ENCODE measurements at regions of chr2 and their contacts with region 1.

Region 1: DNA sequence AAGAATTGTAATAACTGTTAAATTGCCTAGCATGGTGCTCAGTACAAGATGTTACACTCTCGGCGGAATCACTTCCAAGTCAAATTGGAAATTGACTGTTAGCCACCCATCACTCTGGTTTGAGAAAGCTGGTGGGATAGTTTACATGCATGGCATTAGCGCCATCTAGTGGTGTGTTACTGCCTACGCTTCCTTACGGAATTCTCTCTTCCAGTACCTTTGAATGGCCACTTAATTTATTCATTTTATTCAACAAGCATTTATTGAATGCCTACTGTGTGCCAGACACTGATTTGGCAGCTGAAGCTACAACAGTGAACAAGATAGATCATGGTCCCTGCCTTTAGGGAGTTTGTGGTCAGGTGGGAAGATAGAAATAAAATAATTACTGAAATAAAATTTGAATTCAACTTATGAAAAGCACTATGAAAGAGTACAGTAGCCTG is 171.2 kb downstream of the TMEM247 start:
- DNase-seq: no peak
- H3K4me3 ChIP-seq: no peak overlapping the region
- H3K27me3 ChIP-seq: no peaks in the 10 kb centered on the region
- CTCF ChIP-seq: peak; percentile 90

Region 2: DNA sequence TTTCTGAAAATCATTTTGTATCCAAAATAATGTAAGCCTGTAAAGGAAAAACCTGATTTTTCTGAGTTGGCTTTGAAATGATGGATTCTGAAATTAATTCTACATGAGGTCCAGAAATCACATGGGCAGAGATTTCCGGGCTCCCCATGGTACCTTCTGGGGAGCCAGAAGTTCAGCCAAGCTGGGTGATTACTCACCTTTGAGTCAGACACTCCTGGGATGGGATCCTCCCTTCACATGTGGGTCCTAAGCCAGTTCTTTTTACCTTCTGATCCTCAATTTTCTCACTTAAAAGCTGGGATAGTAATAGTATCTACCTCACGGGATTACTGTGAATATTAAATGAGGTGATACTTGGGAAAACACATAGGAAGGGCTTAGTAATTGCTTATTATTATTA is 533.2 kb before region 1 on chr2:
- CTCF ChIA-PET with region 1: no interaction called
- POLR2A ChIA-PET with region 1: no interaction called
- DNase-seq: no peak
- H3K4me3 ChIP-seq: no peak overlapping the region
- H3K27me3 ChIP-seq: no peaks in the 10 kb centered on the region
- CTCF ChIP-seq: no peak

Region 3: DNA sequence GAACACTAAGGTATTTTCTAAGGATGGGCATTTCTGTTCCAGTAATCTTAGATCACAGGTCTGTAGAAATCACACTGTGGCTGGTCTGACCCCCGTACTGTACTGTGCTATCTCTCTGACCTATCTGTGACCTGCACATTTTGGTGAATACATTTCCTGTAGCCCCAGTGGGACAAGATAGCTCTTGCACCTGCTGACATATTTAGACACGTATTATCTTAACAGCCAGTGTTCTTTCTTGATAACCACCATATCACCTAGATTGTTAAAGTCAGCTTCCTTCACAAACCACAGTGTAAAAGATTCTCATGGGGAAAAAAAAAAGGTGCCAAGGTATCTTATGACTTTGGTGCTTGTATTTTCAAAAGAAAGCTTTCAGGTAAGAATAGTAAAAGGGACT is 211.0 kb before region 1 on chr2:
- CTCF ChIA-PET with region 1: no interaction called
- POLR2A ChIA-PET with region 1: no interaction called
- DNase-seq: no peak
- H3K4me3 ChIP-seq: no peak overlapping the region
- H3K27me3 ChIP-seq: no peaks in the 10 kb centered on the region; the same call in none of the 2 replicates
- CTCF ChIP-seq: no peak

Region 4: DNA sequence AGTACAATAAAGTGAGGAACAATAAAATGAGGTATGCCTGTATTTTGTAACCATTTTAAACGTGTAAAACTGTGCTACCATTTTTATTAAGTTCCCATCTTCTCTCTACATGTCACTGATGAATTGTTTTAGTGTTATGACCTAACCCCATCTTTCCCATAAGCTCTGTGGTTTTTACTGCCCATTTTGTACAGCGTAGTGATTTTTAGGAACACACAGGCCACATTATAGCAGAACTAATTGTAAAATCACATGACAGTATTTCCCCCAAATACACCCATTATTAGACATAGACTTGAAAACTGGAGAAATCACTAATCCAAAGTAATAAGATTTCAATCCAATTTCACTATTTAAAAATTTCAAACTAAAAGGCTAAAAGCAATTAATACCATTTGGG is 40.6 kb before region 1 on chr2:
- CTCF ChIA-PET with region 1: no interaction called
- POLR2A ChIA-PET with region 1: no interaction called
- DNase-seq: no peak
- H3K4me3 ChIP-seq: no peak overlapping the region
- H3K27me3 ChIP-seq: no peaks in the 10 kb centered on the region
- CTCF ChIP-seq: no peak

Region 5: DNA sequence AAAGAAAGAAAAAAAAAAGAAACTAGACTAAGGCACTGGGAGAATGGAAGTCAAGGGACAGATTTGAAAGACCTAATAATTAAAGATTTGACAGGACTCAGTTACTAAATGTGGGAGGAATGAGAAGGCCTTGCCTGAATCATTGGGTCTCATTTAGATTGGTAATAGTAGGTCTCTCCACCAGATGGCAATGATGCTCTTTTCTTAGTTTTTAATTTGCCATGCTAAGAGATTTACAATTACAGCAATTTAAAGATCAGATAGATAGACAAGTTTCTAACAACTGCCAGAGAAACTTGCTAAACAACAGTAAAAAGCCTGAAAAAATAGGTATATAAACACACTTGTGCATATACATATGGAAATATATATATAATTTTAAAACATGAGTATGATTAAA is 18.2 kb before region 1 on chr2:
- CTCF ChIA-PET with region 1: interaction called, 37 read pairs
- POLR2A ChIA-PET with region 1: interaction called, 3 read pairs
- DNase-seq: peak; percentile 39
- H3K4me3 ChIP-seq: no peak overlapping the region
- H3K27me3 ChIP-seq: no peaks in the 10 kb centered on the region
- CTCF ChIP-seq: peak; percentile 54

Region 6: GRCh38 chr2:46679761-46680160 is 29.2 kb after region 1 on chr2:
- CTCF ChIA-PET with region 1: interaction called, 12 read pairs
- POLR2A ChIA-PET with region 1: interaction called, 3 read pairs
- DNase-seq: peak; percentile 85
- H3K4me3 ChIP-seq: no peak overlapping the region
- H3K27me3 ChIP-seq: no peaks in the 10 kb centered on the region
- CTCF ChIP-seq: no peak

Region 7: DNA sequence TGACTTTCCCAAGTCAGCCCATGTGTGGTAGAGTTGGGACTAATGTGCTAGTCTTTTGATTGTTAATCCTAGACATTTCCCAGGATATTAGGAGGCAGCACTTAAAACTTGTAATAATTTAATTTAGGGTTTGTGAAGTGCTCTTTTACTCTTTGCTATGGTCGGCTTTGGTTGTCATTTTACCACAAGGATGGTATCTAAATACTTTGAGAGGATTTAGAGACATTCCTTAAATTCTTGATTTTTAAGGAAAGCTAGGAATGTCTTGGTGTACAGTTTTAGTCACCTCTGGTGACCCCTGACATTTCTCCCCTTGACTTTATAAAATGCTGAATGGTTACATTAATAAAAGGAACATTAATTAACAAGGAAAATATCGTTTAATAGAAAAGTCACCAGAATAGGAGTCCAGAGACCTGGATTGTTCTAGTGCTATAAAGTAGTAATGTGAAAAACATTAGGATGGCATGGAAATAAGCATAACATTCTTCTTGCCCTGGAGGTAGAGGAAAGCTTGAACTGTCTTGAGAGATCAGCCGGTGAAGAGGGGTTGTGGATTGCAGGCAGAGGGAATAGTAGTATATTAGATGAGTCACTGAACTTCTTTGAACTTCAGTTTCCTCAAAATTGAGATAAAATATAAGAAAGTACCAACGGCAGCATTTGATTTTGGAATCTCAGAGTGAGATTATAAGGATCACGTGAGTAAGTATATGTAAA is 55.8 kb after region 1 on chr2:
- CTCF ChIA-PET with region 1: interaction called, 15 read pairs
- POLR2A ChIA-PET with region 1: no interaction called
- DNase-seq: no peak
- H3K4me3 ChIP-seq: peak overlapping the region; percentile 97
- H3K27me3 ChIP-seq: no peaks in the 10 kb centered on the region
- CTCF ChIP-seq: no peak

Region 8: DNA sequence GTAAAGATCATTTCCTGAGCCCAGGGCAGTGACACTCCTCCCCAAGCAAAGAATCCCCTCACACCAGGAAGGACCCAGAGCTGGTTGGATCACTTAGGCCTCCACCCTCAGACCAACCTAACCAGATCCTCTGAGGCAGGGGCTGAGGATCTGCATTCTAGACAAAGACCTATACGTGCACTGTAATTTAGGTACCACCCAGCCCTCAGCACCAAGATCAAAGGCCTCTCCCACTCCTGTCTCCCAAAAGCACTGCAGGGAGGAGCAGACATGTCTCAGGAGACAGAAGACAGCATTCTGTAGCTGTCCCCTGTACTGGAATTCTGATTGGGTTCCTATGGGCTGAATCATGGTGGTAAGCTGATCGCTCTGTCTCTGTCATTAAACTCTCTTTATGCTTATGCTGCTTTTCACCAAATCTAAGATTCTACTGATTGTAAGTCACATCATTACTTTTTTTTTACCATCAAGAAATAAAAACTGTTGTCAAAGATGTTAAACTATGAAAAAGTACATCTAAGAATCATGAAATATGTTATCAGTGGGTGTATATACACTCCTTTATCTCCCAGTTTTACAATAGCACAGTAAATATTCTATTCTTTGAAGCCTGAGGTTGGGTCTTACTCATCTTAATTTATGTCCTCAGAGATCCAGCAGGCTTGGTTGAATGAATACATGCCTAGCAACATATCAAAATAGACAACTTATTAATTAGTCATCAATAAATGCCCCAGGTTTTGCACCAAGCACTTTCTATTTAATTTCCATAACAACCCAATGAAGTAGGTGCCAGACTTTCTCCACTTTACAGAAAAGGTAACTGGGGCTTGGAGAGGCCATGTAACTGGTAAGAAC is 236.7 kb after region 1 on chr2:
- CTCF ChIA-PET with region 1: interaction called, 31 read pairs
- POLR2A ChIA-PET with region 1: no interaction called
- DNase-seq: no peak
- H3K4me3 ChIP-seq: no peak overlapping the region
- H3K27me3 ChIP-seq: no peaks in the 10 kb centered on the region
- CTCF ChIP-seq: no peak

Measured in BJ (cell line).